Vagina (tissue), 2 donors: ENCODE measurements at regions of chr14 and their contacts with region 1.

Region 1: GRCh38 chr14:43914041-43914693 is 592.9 kb downstream of the FSCB start:
- DNase-seq: no peak
- H3K4me3 ChIP-seq: no peak overlapping the region
- H3K27ac ChIP-seq: no peak overlapping the region
- H3K4me1 ChIP-seq: no peaks in the 10 kb centered on the region
- H3K27me3 ChIP-seq: no peaks in the 10 kb centered on the region
- CTCF ChIP-seq: no peak
- POLR2A ChIP-seq: no peak

Region 2: GRCh38 chr14:42224053-42224888 is 1689.9 kb before region 1 on chr14:
- intact Hi-C with region 1: loop called (anchors 5 kb)
- DNase-seq: no peak
- H3K4me3 ChIP-seq: no peak overlapping the region
- H3K27ac ChIP-seq: no peak overlapping the region
- H3K4me1 ChIP-seq: no peaks in the 10 kb centered on the region
- H3K27me3 ChIP-seq: no peaks in the 10 kb centered on the region
- CTCF ChIP-seq: peak; percentile 23 to 70 (median 62)
- POLR2A ChIP-seq: no peak

Region 3: GRCh38 chr14:45641541-45641940 is 1727.4 kb after region 1 on chr14:
- intact Hi-C with region 1: loop called (anchors 5 kb)
- DNase-seq: no peak
- H3K4me3 ChIP-seq: no peak overlapping the region
- H3K27ac ChIP-seq: no peak overlapping the region
- H3K4me1 ChIP-seq: no peaks in the 10 kb centered on the region
- H3K27me3 ChIP-seq: no peaks in the 10 kb centered on the region
- CTCF ChIP-seq: no peak
- POLR2A ChIP-seq: no peak